Naive thymus-derived CD4-positive, alpha-beta T cell (primary cell): ENCODE measurements at regions of chr7 and their contacts with region 1.

Region 1: DNA sequence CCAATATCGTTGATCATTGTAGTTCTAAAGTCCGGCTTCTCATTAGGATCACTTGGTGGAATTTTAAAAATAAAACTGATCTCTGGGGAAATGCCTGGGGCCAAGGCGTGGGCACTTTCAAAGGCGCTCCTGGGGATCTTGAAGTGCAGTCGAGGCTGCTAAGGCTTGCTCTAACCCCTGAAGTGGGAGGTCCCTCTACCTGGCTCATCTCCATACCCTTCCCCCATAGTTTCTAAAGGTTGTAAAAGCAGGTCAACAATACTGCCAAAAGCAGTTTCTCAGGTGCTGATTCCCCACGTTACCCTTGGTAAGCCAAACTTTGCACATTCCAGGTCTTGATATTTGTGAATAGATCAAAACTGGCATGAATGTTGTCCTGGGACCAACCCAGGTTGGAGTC is 79.0 kb upstream of the SP8 start:
- DNase-seq: no peak
- ATAC-seq: no peak
- H3K4me3 ChIP-seq: no peak overlapping the region
- H3K4me3 Mint-ChIP-seq: no peak overlapping the region
- H3K27ac ChIP-seq: no peak overlapping the region
- H3K27ac Mint-ChIP-seq: no peak overlapping the region
- H3K4me1 ChIP-seq: no peaks in the 10 kb centered on the region
- H3K4me1 Mint-ChIP-seq: no peaks in the 10 kb centered on the region
- H3K27me3 ChIP-seq: no peaks in the 10 kb centered on the region
- H3K27me3 Mint-ChIP-seq: peaks cover 0 to 5% (median 0%) of the 10 kb centered on the region in 5 donors

Region 2: DNA sequence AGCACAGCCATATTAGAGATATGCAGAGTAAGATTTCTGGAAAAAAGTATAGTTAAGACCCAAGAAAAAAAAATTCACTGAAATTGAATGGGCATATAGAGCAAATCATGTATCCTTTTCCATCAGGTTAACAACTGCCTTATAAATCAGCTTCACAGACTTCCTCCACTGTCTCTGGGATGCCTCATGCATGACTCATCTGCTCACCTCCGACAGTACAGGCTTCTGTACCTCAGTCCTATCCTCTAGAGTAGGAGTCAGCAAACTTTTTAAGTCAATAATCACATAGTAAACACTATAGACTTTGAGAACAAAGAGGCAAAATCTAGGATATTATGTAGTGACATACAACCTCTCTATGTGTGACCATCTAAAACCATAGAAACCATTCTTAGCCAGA is 132.6 kb after region 1 on chr7:
- CTCF ChIA-PET with region 1: no interaction called
- POLR2A ChIA-PET with region 1: no interaction called
- intact Hi-C with region 1: loop called in 1 of 2 experiments (anchors 5 kb)
- DNase-seq: no peak
- ATAC-seq: no peak
- H3K4me3 ChIP-seq: no peak overlapping the region
- H3K4me3 Mint-ChIP-seq: no peak overlapping the region
- H3K27ac ChIP-seq: no peak overlapping the region
- H3K27ac Mint-ChIP-seq: no peak overlapping the region
- H3K4me1 ChIP-seq: no peaks in the 10 kb centered on the region
- H3K4me1 Mint-ChIP-seq: no peaks in the 10 kb centered on the region
- H3K27me3 ChIP-seq: no peaks in the 10 kb centered on the region
- H3K27me3 Mint-ChIP-seq: peaks cover 0 to 6% (median 0%) of the 10 kb centered on the region in 5 donors

Region 3: DNA sequence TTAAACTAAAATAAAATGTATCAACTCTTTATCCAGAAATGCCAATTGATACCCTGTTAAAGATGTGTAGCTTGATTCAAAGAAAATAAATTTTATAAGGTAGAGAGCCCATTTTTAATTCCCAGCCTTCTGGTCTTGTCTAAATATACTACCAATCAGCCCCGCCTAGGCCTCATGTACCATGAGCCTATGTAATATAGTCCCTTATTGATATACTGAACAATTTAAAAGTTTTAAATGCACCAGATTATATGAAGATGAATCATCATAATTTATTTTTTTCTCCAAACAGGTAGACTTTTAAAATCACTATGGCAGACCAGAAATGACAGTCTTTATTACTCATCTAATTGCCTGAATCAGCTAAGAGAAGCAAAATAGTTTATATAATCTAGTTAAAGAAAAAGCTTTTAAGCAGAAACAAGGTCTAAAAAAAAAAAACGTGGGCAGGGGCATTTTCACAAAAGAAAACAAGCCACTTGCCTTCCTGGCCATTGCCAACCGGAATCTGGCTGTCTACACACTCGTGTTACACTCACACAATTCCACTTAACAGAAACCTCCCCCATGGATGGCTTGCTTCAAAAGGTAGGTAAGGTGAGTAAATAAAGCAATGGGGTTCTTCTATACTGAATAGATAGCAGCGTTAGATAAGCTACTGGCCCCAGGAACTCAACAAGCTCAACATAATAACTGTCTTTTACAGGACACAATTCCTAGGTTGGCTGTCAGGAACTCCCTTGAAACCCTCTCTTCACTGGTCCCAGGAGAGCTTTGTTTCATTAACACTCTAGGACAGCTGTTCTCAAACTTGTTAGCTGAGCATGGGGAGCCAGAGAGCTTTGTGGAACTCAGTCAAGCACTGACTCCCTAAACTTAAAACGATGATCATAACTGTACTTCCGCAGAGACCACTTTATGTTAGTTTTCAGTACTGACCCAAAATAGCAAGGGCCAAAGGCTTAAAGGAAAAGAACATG is 1454.0 kb after region 1 on chr7:
- CTCF ChIA-PET with region 1: no interaction called
- POLR2A ChIA-PET with region 1: no interaction called
- intact Hi-C with region 1: no loop called
- DNase-seq: no peak
- ATAC-seq: no peak
- H3K4me3 ChIP-seq: no peak overlapping the region
- H3K4me3 Mint-ChIP-seq: no peak overlapping the region
- H3K27ac ChIP-seq: no peak overlapping the region
- H3K27ac Mint-ChIP-seq: no peak overlapping the region
- H3K4me1 ChIP-seq: no peaks in the 10 kb centered on the region
- H3K4me1 Mint-ChIP-seq: no peaks in the 10 kb centered on the region
- H3K27me3 ChIP-seq: no peaks in the 10 kb centered on the region
- H3K27me3 Mint-ChIP-seq: peaks cover 0 to 19% (median 10%) of the 10 kb centered on the region in 5 donors